Endothelial cell of umbilical vein (primary cell): ENCODE measurements at regions of chr14 and their contacts with region 1.

Region 1: DNA sequence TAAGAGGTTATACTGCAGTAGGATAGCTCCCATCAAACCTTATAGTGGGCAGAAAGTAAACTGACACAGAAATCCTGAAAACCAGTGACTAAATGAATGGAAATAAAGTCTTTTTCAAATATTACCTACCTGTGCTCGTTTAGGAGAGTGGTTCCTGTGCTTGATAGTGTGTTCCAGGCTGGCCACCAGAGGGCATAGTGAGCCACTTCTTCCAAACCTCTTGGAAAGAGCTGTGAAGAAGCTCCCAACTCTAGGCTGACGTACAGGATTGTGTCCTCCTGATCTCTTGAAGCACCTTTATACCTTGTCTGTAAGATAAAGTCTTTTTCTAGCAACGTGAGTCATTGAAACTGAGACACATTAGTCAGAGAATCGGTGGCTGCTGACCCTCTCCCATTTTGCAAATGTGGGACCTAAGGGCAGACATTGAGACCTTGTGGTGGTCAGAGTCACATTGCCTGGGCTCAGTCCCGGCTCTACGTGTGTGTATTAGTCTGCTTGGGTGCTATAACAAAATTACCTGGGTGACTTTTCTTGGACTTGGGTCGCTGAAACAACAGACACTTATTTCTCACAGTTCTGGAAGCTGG is 17.6 kb downstream of the TDP1 start:
- DNase-seq: peak; percentile 67
- H3K4me3 ChIP-seq: no peak overlapping the region
- H3K27ac ChIP-seq: no peak overlapping the region
- H3K4me1 ChIP-seq: no peaks in the 10 kb centered on the region
- H3K27me3 ChIP-seq: no peaks in the 10 kb centered on the region
- CTCF ChIP-seq: peak; percentile 79 to 83
- POLR2A ChIP-seq: no peak

Region 2: DNA sequence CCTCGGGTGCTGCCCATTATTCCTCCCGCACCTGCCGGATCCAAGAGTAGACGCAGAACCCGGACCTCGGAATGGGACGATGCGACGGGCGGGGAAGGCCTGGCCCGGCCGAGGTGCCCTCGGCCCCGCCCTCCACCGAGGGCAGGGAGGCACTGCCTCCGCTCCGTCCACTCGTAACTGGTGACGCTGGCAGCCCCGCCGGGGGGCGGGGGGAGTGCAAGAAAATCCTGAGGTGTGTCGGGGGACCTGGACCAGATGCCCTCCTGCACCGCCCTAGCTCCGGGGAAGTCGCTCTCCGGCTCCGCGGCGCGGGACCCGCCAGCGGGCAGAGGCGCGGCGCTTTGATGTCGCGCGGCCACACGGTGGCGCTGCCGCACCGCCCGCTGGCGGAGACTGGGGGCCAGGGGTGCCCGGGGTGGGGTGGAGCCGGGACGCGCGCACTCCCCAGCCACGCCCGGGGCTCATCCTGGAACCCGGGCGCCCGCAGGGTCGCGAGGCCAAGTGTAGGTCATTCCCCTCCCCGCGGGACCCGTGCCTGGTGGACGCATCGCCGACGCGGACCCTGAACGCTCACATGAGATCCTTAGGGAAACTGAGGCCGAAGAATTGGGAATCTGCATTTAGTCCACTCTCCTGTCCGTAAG is 946.1 kb before region 1 on chr14:
- CTCF ChIA-PET with region 1: interaction called, 24 read pairs
- POLR2A ChIA-PET with region 1: no interaction called
- dilution Hi-C with region 1: no loop called
- intact Hi-C with region 1: no loop called
- DNase-seq: peak; percentile 25
- H3K4me3 ChIP-seq: peak overlapping the region; percentile 40 to 65 (median 56)
- H3K27ac ChIP-seq: no peak overlapping the region
- H3K4me1 ChIP-seq: peaks cover 9% of the 10 kb centered on the region
- H3K27me3 ChIP-seq: peaks cover 25 to 39% of the 10 kb centered on the region in 2 experiments
- CTCF ChIP-seq: peak; percentile 74 to 88
- POLR2A ChIP-seq: no peak

Region 3: DNA sequence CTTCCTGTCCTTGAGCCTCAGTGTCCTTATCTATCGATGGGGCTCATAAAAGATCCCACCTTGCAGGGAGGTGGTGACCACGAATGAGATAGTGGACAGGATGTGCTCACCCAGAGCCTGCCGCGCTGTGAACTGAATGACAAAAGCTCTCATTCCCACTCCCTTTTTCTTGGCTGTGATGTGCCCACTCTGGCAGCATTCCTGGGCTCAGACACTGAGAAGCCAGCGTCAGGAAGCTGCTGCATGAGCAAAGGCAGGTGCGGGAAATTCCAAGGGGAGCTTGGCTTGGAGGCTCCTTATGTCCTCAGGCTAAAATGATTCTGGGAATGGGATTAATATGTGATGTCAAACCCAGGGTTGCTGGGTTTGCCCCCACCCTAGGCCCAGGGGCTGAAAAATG is 80.4 kb before region 1 on chr14:
- CTCF ChIA-PET with region 1: no interaction called
- POLR2A ChIA-PET with region 1: no interaction called
- dilution Hi-C with region 1: no loop called
- intact Hi-C with region 1: no loop called
- DNase-seq: no peak
- H3K4me3 ChIP-seq: no peak overlapping the region
- H3K27ac ChIP-seq: no peak overlapping the region
- H3K4me1 ChIP-seq: no peaks in the 10 kb centered on the region
- H3K27me3 ChIP-seq: no peaks in the 10 kb centered on the region
- CTCF ChIP-seq: no peak
- POLR2A ChIP-seq: no peak

Region 4: DNA sequence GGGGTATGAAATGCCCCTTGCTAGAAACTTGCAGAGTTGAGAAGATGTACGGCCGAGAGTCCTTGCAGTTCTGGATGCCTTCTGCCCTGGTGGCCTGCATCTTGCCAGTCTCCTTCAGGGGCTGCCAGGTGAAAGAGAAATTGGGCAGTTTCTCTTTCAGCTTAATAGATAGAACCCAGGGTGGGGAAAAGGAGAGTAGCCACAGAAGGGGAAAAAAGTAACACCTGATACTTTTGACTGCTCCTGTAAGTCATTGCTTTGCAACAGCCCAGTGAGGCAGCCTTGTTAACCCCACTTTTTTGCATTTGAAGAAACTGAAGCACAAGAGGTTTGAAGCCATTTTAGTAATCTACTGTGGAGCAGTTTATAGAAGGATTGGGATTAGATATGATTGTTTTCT is 10.0 kb after region 1 on chr14:
- CTCF ChIA-PET with region 1: interaction called, 37 read pairs
- POLR2A ChIA-PET with region 1: no interaction called
- dilution Hi-C with region 1: no loop called
- intact Hi-C with region 1: no loop called
- DNase-seq: no peak
- H3K4me3 ChIP-seq: no peak overlapping the region
- H3K27ac ChIP-seq: no peak overlapping the region
- H3K4me1 ChIP-seq: no peaks in the 10 kb centered on the region
- H3K27me3 ChIP-seq: no peaks in the 10 kb centered on the region
- CTCF ChIP-seq: no peak
- POLR2A ChIP-seq: no peak

Region 5: GRCh38 chr14:90060312-90060964 is 87.1 kb after region 1 on chr14:
- CTCF ChIA-PET with region 1: interaction called, 36 read pairs
- POLR2A ChIA-PET with region 1: no interaction called
- dilution Hi-C with region 1: no loop called
- intact Hi-C with region 1: loop called (anchors 1 kb)
- DNase-seq: peak; percentile 54
- H3K4me3 ChIP-seq: peak overlapping the region; percentile 20 to 53 (median 46)
- H3K27ac ChIP-seq: no peak overlapping the region
- H3K4me1 ChIP-seq: peaks cover 27% of the 10 kb centered on the region
- H3K27me3 ChIP-seq: peaks cover 51 to 75% of the 10 kb centered on the region in 2 experiments
- CTCF ChIP-seq: peak; percentile 52 to 72
- POLR2A ChIP-seq: no peak

Region 6: DNA sequence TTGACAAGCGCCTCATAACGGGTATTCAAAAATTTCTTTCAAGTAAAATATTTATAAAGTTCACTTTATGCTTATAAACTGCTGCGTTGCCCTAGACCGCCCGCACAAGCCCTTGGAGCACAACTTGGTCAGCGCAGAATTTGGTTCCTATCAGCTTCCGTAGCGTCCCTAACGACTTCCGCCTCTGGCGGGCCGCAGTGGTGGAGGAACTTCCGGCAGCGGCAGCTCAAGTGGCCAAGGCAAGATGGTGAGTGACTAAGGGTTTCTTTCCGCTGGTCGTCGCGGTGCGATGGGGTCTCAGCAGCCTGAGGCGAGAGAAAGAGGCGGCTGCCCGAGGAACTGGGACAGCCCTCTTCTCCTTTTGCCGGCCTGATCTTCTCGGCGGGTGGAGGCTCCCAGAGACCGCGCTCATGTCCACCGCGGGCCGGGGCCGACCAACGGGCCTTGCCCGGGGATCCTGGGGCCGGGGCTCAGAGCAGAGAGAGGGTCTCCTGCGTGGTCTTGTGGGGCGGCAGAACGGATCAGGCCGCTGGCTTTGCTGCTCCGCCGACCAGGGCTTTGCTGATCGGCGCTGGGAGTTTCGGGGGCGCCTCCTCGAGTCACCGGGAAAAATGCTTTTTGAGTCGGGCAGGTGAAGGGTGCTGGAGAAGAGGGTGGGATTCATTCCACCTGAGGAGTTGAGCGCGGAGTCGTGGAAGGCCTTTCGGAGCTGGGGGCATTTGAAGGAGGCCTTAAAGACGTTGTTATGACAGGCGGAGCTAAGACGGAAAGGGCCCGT is 283.2 kb after region 1 on chr14 and contains the start of gene PSMC1:
- CTCF ChIA-PET with region 1: interaction called, 21 read pairs
- POLR2A ChIA-PET with region 1: no interaction called
- dilution Hi-C with region 1: no loop called
- intact Hi-C with region 1: no loop called
- DNase-seq: peak; percentile 95
- H3K4me3 ChIP-seq: peak within 1 kb of the TSS; percentile 50 to 95 (median 77)
- H3K27ac ChIP-seq: peak within 1 kb of the TSS; percentile 86
- H3K4me1 ChIP-seq: peaks cover 5% of the 10 kb centered on the region
- H3K27me3 ChIP-seq: peaks cover 0 to 2% of the 10 kb centered on the region in 2 experiments
- CTCF ChIP-seq: no peak
- POLR2A ChIP-seq: peak; percentile 84
- total RNA-seq, gene PSMC1: 129 and 132 TPM in 2 replicates